ENCODE measurements at regions of chr3 and their contacts with region 1.

Region 1: GRCh38 chr3:151227807-151228665 is 25.0 kb upstream of the GPR171 start:
- DNase-seq: peak; percentile 60
- ATAC-seq: peak; percentile 96
- H3K4me3 ChIP-seq: no peak overlapping the region
- H3K27ac ChIP-seq: no peak overlapping the region
- H3K4me1 ChIP-seq: peaks cover 9% of the 10 kb centered on the region
- H3K27me3 ChIP-seq: no peaks in the 10 kb centered on the region
- CTCF ChIP-seq: peak; percentile 85 to 95 (median 89); a peak in 5 of 6 replicates
- EP300 ChIP-seq: 0 out of 4 replicates have a peak, but pooled peaks of 1 of the 2 experiments have one; percentile 25
- POLR2A ChIP-seq: no peak
- RAD21 ChIP-seq: peak; percentile 94

Region 2: GRCh38 chr3:151168269-151169094 is 59.6 kb before region 1 on chr3:
- CTCF ChIA-PET with region 1: interaction called, 52 read pairs
- POLR2A ChIA-PET with region 1: no interaction called
- RAD21 ChIA-PET with region 1: interaction called, 18 read pairs
- SMC1A ChIA-PET with region 1: interaction called, 49 read pairs
- in situ Hi-C with region 1: loop called (anchors 5 kb)
- intact Hi-C with region 1: loop called (anchors 1 kb)
- DNase-seq: no peak
- ATAC-seq: peak; percentile 81
- H3K4me3 ChIP-seq: no peak overlapping the region
- H3K27ac ChIP-seq: no peak overlapping the region
- H3K4me1 ChIP-seq: peaks cover 21% of the 10 kb centered on the region
- H3K27me3 ChIP-seq: no peaks in the 10 kb centered on the region
- CTCF ChIP-seq: peak; percentile 78 to 92 (median 87)
- EP300 ChIP-seq: no peak
- POLR2A ChIP-seq: no peak
- RAD21 ChIP-seq: peak; percentile 90

Region 3: DNA sequence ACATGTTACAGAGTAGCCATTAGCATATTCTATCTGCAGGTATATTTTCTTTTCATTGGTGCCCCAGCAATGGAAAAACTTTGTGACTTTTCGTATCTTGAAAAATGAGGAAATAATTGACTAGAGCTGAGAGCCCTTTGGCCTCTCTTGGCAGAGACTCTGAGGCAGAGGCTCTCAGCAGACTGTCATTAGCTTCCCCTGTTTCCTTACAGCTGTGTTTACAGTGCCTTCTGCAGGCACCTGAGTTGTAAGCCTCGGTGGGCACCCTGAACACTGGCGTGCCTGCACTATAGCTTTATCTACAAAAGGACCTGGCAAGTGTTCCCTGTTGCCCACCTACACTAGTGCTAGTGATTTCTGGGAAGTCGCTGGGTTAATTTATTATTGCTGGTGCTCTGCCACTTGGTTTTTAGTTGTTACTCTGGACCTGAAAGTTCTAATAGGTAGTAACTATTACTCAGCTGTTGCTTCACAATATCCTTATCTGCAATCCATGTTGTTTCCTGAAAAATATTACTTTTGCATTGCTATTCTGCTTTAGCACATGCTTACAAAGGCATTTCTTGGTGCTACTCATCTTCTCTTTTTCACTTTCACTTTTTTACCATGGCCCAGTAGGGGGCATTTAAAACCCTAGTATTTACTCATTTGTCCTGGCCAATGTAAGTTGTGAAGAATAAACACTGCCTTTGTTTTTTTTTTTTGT is 17.2 kb before region 1 on chr3:
- CTCF ChIA-PET with region 1: interaction called, 21 read pairs
- POLR2A ChIA-PET with region 1: no interaction called
- RAD21 ChIA-PET with region 1: interaction called, 3 read pairs
- SMC1A ChIA-PET with region 1: interaction called, 4 read pairs
- in situ Hi-C with region 1: no loop called
- intact Hi-C with region 1: no loop called
- DNase-seq: no peak
- ATAC-seq: peak; percentile 88
- H3K4me3 ChIP-seq: no peak overlapping the region
- H3K27ac ChIP-seq: no peak overlapping the region
- H3K4me1 ChIP-seq: no peaks in the 10 kb centered on the region
- H3K27me3 ChIP-seq: no peaks in the 10 kb centered on the region
- CTCF ChIP-seq: 0 out of 6 replicates have a peak, but pooled peaks of 2 of the 3 experiments have one; percentile 13 to 25
- EP300 ChIP-seq: no peak
- POLR2A ChIP-seq: no peak
- RAD21 ChIP-seq: peak; percentile 14; the same call in 1 of the 2 replicates

Region 4: DNA sequence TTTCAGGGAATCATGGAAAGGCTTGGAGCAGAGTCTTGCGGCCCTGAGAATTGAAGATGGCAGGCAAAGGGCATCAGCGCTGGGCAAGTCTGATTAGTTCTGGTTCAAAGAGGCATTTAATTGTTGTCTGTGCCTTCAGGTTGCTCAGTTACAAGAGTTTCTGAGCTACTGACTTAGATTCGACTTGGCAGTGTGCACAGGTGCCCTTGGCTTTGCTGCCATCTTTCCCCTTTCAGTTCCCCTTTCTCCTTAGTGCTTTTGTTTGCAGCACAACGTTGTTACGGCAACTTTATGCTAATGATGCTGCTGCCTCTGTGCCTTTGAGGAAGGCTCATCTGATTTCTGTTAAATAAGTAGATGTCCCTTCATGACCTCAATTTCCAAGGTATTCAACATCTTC is 37.8 kb after region 1 on chr3:
- CTCF ChIA-PET with region 1: interaction called, 13 read pairs
- POLR2A ChIA-PET with region 1: no interaction called
- RAD21 ChIA-PET with region 1: interaction called, 6 read pairs
- SMC1A ChIA-PET with region 1: interaction called, 8 read pairs
- in situ Hi-C with region 1: no loop called
- intact Hi-C with region 1: no loop called
- DNase-seq: peak; percentile 69
- ATAC-seq: peak; percentile 98
- H3K4me3 ChIP-seq: no peak overlapping the region
- H3K27ac ChIP-seq: no peak overlapping the region
- H3K4me1 ChIP-seq: peaks cover 7% of the 10 kb centered on the region; the same call in 1 of the 2 replicates
- H3K27me3 ChIP-seq: no peaks in the 10 kb centered on the region
- CTCF ChIP-seq: no peak
- EP300 ChIP-seq: peak; percentile 47 to 52; a peak in 3 of 4 replicates
- POLR2A ChIP-seq: no peak
- RAD21 ChIP-seq: no peak

Region 5: GRCh38 chr3:151282921-151283320 is 54.9 kb after region 1 on chr3:
- CTCF ChIA-PET with region 1: interaction called, 182 read pairs
- POLR2A ChIA-PET with region 1: interaction called, 3 read pairs
- RAD21 ChIA-PET with region 1: interaction called, 50 read pairs
- SMC1A ChIA-PET with region 1: interaction called, 98 read pairs
- in situ Hi-C with region 1: loop called (anchors 5 kb)
- intact Hi-C with region 1: loop called (anchors 1 kb)
- DNase-seq: no peak
- ATAC-seq: peak; percentile 77
- H3K4me3 ChIP-seq: no peak overlapping the region
- H3K27ac ChIP-seq: no peak overlapping the region
- H3K4me1 ChIP-seq: peaks cover 6% of the 10 kb centered on the region
- H3K27me3 ChIP-seq: no peaks in the 10 kb centered on the region
- CTCF ChIP-seq: peak; percentile 49 to 67 (median 53); a peak in 5 of 6 replicates
- EP300 ChIP-seq: no peak
- POLR2A ChIP-seq: no peak
- RAD21 ChIP-seq: peak; percentile 90

Region 6: DNA sequence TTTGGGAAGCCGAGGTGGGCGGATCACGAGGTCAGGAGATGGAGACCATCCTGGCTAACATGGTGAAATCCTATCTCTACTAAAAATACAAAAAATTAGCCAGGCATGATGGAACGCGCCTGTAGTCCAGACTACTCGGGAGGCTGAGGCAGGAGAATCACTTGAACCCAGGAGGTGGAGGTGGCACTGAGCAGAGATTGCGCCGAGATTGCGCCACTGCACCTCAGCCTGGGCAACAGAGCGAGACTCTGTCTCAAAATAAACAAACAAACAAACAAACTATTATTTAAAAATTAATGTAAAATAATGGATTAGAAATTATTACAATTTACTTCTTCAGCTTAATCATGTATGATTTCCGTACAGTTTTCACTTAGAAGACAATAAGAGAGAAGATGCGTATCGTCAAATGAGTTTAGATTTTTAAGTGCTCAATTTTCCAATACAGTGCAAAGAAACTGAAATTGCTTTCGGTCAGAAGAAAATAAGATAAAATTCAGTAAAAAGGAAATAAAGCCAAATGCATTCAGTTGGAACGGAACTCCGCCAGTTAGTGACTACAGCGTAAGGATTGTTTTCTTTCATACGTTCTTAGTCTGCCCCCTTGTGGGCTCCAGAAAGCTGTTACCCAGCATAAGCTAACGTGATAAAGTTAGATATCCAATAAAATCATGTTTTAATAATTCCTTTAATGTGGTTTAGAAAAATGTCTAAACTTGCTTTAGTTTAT is 610.7 kb after region 1 on chr3:
- CTCF ChIA-PET with region 1: interaction called, 23 read pairs
- POLR2A ChIA-PET with region 1: no interaction called
- RAD21 ChIA-PET with region 1: interaction called, 4 read pairs
- SMC1A ChIA-PET with region 1: interaction called, 7 read pairs
- in situ Hi-C with region 1: no loop called
- intact Hi-C with region 1: loop called (anchors 1 kb)
- DNase-seq: peak; percentile 2
- ATAC-seq: peak; percentile 87
- H3K4me3 ChIP-seq: no peak overlapping the region
- H3K27ac ChIP-seq: no peak overlapping the region
- H3K4me1 ChIP-seq: no peaks in the 10 kb centered on the region
- H3K27me3 ChIP-seq: no peaks in the 10 kb centered on the region
- CTCF ChIP-seq: peak; percentile 66 to 75 (median 73); a peak in 5 of 6 replicates
- EP300 ChIP-seq: no peak
- POLR2A ChIP-seq: no peak
- RAD21 ChIP-seq: peak; percentile 87

Measured in GM12878 (cell line).